ENCODE measurements at regions of chr4 and their contacts with region 1.

Region 1: DNA sequence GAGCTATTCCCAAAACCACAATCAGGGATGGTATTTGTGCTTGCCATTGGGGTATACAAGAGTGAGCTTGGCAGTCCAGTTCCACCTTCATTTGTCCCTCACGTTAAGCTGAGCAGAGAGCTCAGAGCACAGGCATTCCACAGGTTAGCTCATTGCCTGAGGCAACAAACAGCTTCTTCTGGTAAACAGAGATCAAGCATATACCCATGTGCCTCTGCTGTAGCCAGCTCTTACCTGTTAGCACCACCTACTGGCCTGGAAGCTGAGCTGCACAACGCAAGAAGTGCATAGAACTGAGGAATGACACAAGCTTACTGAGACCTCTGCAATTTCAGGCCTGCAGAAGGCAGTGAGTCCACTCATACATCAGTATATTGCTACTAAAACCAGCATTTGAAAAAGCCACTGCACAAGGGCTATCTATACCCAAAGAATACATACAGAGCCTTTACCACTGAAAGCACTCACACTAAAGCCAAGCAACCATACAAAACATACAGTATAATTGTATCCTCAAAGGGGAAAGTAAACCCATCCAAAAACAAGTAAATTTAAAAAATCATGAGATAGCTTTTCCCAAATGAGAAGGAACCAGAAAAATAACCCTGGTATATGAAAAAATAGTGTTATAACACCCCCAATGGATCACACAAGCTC is 258.3 kb upstream of the GABRA2 start:
- DNase-seq: peak; percentile 81
- H3K4me3 Mint-ChIP-seq: no peak overlapping the region
- H3K27ac Mint-ChIP-seq: no peak overlapping the region
- H3K4me1 Mint-ChIP-seq: no peaks in the 10 kb centered on the region
- H3K27me3 Mint-ChIP-seq: no peaks in the 10 kb centered on the region
- CTCF ChIP-seq: peak; percentile 60

Region 2: GRCh38 chr4:46323891-46324416 is 324.3 kb before region 1 on chr4:
- CTCF ChIA-PET with region 1: interaction called, 84 read pairs
- POLR2A ChIA-PET with region 1: no interaction called
- intact Hi-C with region 1: loop called (anchors 1 kb)
- DNase-seq: no peak
- H3K4me3 Mint-ChIP-seq: no peak overlapping the region
- H3K27ac Mint-ChIP-seq: no peak overlapping the region
- H3K4me1 Mint-ChIP-seq: peaks cover 2% of the 10 kb centered on the region
- H3K27me3 Mint-ChIP-seq: no peaks in the 10 kb centered on the region
- CTCF ChIP-seq: no peak

Region 3: DNA sequence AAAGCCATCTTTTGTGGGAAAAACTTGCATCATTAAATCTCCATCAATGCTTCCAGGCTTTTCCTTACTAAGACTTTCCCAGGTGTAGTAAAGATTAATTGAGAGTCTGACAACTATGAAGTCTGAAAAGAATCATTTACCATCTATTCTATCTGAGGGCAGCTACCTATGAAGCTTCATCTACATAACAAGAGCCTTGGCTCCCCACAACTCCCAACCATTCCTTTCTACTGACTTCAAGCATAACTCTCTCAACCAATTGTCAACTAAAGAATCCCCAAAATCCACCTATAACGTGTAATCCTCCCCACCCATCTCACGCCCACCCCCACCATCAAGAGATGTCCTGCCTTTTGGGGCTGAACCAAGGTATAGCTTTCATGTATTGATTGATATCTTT is 156.8 kb before region 1 on chr4:
- CTCF ChIA-PET with region 1: no interaction called
- POLR2A ChIA-PET with region 1: no interaction called
- intact Hi-C with region 1: no loop called
- DNase-seq: no peak
- H3K4me3 Mint-ChIP-seq: no peak overlapping the region
- H3K27ac Mint-ChIP-seq: no peak overlapping the region
- H3K4me1 Mint-ChIP-seq: no peaks in the 10 kb centered on the region
- H3K27me3 Mint-ChIP-seq: no peaks in the 10 kb centered on the region
- CTCF ChIP-seq: no peak